CD4-positive, alpha-beta T cell (primary cell): ENCODE measurements at regions of chr4 and their contacts with region 1.

Region 1: DNA sequence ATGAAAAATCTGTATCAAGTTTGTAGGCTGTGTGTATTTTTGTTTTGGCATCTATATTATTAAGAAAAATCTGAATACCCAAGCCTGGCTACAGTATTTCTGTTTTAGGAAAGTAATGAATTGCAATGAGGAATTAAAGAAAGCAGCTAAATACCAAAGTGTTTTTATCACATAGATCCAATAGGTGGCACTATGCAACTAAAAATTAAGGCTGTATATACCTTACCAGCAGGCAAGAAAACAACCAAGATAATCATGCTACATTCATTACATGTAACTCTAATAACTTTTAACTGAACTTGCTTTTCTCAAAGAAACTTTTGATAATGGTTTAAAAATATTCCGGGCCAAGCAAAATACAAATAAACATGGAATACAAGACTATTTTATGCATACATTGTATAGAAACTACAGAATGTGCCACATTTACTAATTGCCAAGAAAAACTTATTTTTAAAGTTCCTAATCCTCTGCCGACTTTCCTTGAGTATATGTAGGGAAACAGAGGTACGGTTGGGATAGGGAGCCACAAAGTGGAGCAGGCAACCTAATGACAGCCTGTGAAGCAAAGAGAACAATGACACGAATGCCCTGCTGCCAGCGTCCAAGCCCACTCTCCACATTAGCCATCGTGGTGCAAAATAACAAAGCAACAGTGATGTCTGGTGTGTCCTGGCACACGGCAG is 63.7 kb downstream of the SEC24D start:
- DNase-seq: peak in 3 of 14 experiments; percentile 63 to 64 (median 63)
- ATAC-seq: peak; percentile 72
- H3K4me3 ChIP-seq: no peak overlapping the region
- H3K4me3 Mint-ChIP-seq: no peak overlapping the region
- H3K27ac ChIP-seq: no peak overlapping the region
- H3K27ac Mint-ChIP-seq: no peak overlapping the region
- H3K4me1 ChIP-seq: no peaks in the 10 kb centered on the region
- H3K4me1 Mint-ChIP-seq: no peaks in the 10 kb centered on the region
- H3K27me3 ChIP-seq: no peaks in the 10 kb centered on the region
- H3K27me3 Mint-ChIP-seq: no peaks in the 10 kb centered on the region
- CTCF ChIP-seq: peak; percentile 75

Region 2: GRCh38 chr4:118865091-118865708 is 93.0 kb after region 1 on chr4:
- CTCF ChIA-PET with region 1: interaction called, 7 read pairs
- POLR2A ChIA-PET with region 1: no interaction called
- intact Hi-C with region 1: loop called in 1 of 2 experiments (anchors 2 kb)
- DNase-seq: peak in 4 of 14 experiments; percentile 21 to 53 (median 38)
- ATAC-seq: peak; percentile 55
- H3K4me3 ChIP-seq: no peak overlapping the region
- H3K4me3 Mint-ChIP-seq: no peak overlapping the region
- H3K27ac ChIP-seq: no peak overlapping the region
- H3K27ac Mint-ChIP-seq: no peak overlapping the region
- H3K4me1 ChIP-seq: peaks cover 4% of the 10 kb centered on the region
- H3K4me1 Mint-ChIP-seq: no peaks in the 10 kb centered on the region
- H3K27me3 ChIP-seq: no peaks in the 10 kb centered on the region
- H3K27me3 Mint-ChIP-seq: no peaks in the 10 kb centered on the region
- CTCF ChIP-seq: peak; percentile 53

Region 3: DNA sequence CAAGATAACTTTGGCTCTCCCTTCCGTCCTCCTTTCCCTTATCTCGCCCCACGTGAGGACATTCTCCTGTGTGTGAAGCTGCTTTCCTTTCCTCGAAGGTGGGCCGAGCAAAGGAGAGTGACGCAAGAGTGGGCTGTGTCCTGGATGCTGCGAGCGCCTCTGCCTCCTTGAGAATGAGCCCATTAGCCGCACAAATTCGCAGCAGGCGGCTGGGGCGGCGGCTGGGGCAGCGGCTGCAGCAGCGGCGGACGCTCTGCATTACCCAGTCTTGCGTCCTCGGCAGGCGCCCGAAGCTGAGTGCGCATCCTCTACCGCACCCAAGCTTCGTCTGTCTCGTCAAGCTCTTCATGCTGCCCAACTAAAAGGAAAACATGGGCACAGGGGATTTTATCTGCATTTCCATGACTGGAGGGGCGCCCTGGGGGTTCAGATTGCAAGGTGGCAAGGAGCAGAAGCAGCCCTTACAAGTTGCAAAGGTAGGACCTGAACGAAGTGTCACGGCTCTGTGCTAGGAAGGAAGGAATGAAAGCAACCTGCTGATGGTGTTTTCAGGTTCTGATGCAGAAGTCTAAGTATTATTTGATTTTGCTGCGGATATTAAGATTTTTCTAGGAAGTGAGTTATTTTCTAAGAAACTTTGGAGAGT is 116.6 kb after region 1 on chr4 and contains the start of gene SYNPO2:
- CTCF ChIA-PET with region 1: interaction called, 10 read pairs
- POLR2A ChIA-PET with region 1: interaction called, 3 read pairs
- intact Hi-C with region 1: loop called (anchors 1 kb)
- DNase-seq: peak in 8 of 14 experiments; percentile 2 to 39 (median 16)
- ATAC-seq: no peak
- H3K4me3 ChIP-seq: peak within 1 kb of the TSS; percentile 35
- H3K4me3 Mint-ChIP-seq: peak within 1 kb of the TSS; percentile 42
- H3K27ac ChIP-seq: no peak within 1 kb of the TSS
- H3K27ac Mint-ChIP-seq: no peak within 1 kb of the TSS
- H3K4me1 ChIP-seq: peaks cover 10% of the 10 kb centered on the region
- H3K4me1 Mint-ChIP-seq: peaks cover 19% of the 10 kb centered on the region
- H3K27me3 ChIP-seq: peaks cover 13 to 27% of the 10 kb centered on the region in 2 experiments
- H3K27me3 Mint-ChIP-seq: peaks cover 43% of the 10 kb centered on the region
- CTCF ChIP-seq: no peak
- total RNA-seq, gene SYNPO2: 0.22 to 0.41 TPM

Region 4: GRCh38 chr4:119041951-119042560 is 269.8 kb after region 1 on chr4:
- CTCF ChIA-PET with region 1: no interaction called
- POLR2A ChIA-PET with region 1: no interaction called
- intact Hi-C with region 1: loop called in 1 of 2 experiments (anchors 5 kb)
- DNase-seq: peak in 13 of 14 experiments; percentile 4 to 83 (median 37)
- ATAC-seq: peak; percentile 89
- H3K4me3 ChIP-seq: no peak overlapping the region
- H3K4me3 Mint-ChIP-seq: no peak overlapping the region
- H3K27ac ChIP-seq: no peak overlapping the region
- H3K27ac Mint-ChIP-seq: no peak overlapping the region
- H3K4me1 ChIP-seq: no peaks in the 10 kb centered on the region
- H3K4me1 Mint-ChIP-seq: no peaks in the 10 kb centered on the region
- H3K27me3 ChIP-seq: no peaks in the 10 kb centered on the region
- H3K27me3 Mint-ChIP-seq: no peaks in the 10 kb centered on the region
- CTCF ChIP-seq: peak; percentile 83

Region 5: DNA sequence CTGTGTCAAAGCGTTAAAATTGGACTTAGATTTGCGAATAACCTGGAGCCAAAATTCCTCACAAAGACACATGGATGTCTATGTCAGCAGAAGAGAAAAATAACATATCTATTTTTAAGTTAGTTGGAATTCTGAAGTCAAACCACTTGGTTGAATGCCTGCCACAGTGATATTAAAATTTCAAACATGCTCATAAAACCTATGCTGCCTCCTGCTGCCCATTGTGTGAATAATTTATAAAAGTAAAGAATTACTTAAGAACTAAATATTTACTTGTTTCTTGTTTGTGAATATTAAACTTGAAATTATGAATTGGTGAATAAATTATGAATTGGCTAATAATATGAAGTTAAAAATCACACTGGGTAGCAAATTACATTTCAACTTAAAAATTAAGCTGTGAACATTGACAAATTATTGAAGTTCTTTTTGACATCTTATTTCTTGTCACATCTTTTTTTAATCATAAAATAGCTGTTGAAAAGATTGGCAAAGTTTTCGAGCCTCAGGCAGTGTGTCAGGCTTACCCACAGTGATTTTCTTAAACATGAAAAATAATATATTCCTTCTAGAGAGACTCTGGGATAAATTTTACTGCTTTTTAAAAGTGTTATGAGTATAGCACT is 514.3 kb after region 1 on chr4:
- CTCF ChIA-PET with region 1: no interaction called
- POLR2A ChIA-PET with region 1: no interaction called
- intact Hi-C with region 1: loop called in 1 of 2 experiments (anchors 2 kb)
- DNase-seq: peak in 10 of 14 experiments; percentile 3 to 74 (median 17)
- ATAC-seq: peak; percentile 55
- H3K4me3 ChIP-seq: no peak overlapping the region
- H3K4me3 Mint-ChIP-seq: no peak overlapping the region
- H3K27ac ChIP-seq: no peak overlapping the region
- H3K27ac Mint-ChIP-seq: no peak overlapping the region
- H3K4me1 ChIP-seq: no peaks in the 10 kb centered on the region
- H3K4me1 Mint-ChIP-seq: peaks cover 30% of the 10 kb centered on the region
- H3K27me3 ChIP-seq: no peaks in the 10 kb centered on the region
- H3K27me3 Mint-ChIP-seq: no peaks in the 10 kb centered on the region
- CTCF ChIP-seq: peak; percentile 76